H1 (cell line): ENCODE measurements at regions of chr2 and their contacts with region 1.

Region 1: DNA sequence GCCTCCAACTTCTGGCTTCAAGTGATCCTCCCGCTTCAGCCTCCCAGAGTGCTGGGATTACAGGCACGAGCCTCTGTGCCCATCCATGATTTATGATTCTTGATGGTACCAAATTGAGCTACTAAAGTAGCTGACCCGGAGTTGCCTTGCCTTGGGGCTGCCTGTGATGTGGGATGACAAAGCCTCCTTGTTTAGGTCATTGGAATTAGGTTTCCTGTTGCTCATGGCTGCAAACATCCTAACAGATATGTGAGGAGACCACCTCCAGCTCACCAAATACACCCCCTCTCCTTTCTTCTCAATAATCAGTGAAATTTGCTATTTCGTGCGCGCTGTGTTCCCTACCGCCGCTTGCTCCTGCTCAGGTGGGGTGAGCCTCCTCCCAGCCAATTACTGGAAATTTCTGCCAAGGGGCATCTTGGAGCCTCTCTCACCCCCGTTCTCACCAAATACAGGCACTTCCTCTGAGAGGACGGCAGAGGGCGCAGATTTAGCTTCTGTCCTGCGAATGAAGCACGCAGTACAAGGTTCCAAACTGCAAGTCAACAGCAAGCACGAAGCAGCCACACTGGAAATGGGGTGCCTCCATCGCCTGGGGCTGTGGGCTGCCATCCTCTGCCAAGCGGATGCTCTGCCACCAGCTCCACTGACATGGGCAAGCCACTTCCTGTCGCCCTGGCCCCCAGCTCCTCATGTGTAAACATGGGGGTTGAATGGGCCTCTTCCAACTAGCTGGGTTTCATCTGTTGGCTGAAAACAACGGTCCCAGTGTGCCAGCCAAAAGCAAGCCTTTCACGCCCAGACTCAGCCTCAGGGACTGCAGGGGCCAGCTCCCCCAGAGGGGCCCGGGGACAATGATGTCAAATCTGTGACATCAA is 71.7 kb downstream of the NCAPH start:
- DNase-seq: peak; percentile 53 to 78
- H3K4me3 ChIP-seq: no peak overlapping the region
- H3K27ac ChIP-seq: no peak overlapping the region
- H3K4me1 ChIP-seq: peaks cover 3 to 7% (median 4%) of the 10 kb centered on the region in 4 experiments
- H3K27me3 ChIP-seq: no peaks in the 10 kb centered on the region; a peak in 1 of 7 replicates
- CTCF ChIP-seq: peak; percentile 78 to 92 (median 88)
- EP300 ChIP-seq: no peak
- POLR2A ChIP-seq: no peak
- RAD21 ChIP-seq: peak; percentile 72 to 81

Region 2: DNA sequence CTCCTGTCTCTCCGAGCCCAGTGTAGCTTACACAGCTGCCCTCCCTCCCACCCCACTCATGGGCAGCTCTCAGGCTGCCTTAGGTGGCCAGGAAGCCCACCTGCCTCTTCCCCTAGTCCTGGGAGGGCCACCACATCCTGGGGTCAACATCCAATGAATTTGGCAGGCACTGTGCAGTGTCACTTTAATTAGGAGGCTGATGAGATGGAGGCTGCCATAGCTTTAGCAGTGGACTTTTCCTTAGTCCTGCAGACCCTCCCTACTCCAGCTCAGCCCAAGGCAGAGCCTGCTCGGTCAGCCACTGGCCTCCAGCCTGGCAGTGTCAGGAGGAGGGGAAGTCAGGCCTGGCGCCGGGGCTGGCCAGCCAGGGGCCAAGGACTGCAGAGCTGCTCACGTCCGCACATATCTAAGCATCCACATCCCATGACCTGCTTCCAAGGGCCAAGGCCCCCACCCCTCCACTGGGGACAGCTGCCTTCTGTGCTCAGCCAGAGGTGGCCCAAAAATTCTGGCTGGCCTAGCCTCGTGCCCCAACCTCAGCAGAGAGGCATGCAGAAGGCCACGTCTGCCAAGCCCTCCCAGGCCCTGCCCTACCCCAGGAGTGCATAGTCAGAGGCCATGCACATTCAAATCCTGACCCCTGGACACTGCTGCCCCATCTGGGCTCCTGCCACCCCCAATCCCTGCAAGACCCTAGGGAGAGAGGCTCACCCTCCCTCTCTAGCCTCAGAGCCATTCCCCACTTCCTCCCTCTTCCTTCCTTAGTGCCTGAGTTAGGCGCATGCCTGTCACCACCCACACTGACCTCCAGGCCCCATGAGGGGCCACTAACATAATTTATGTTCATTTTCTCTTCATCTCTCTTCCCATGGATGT is 324.0 kb before region 1 on chr2:
- CTCF ChIA-PET with region 1: no interaction called
- POLR2A ChIA-PET with region 1: no interaction called
- DNase-seq: peak in 1 of 2 experiments; percentile 30
- H3K4me3 ChIP-seq: no peak overlapping the region
- H3K27ac ChIP-seq: no peak overlapping the region
- H3K4me1 ChIP-seq: no peaks in the 10 kb centered on the region
- H3K27me3 ChIP-seq: no peaks in the 10 kb centered on the region
- CTCF ChIP-seq: no peak
- EP300 ChIP-seq: no peak
- POLR2A ChIP-seq: no peak
- RAD21 ChIP-seq: no peak

Region 3: GRCh38 chr2:96389736-96390135 is 17.5 kb before region 1 on chr2:
- CTCF ChIA-PET with region 1: interaction called, 28 read pairs
- POLR2A ChIA-PET with region 1: interaction called, 3 read pairs
- DNase-seq: no peak
- H3K4me3 ChIP-seq: no peak overlapping the region
- H3K27ac ChIP-seq: no peak overlapping the region
- H3K4me1 ChIP-seq: no peaks in the 10 kb centered on the region
- H3K27me3 ChIP-seq: no peaks in the 10 kb centered on the region
- CTCF ChIP-seq: no peak
- EP300 ChIP-seq: no peak
- POLR2A ChIP-seq: no peak
- RAD21 ChIP-seq: no peak

Region 4: GRCh38 chr2:96438589-96438988 is 31.3 kb after region 1 on chr2:
- CTCF ChIA-PET with region 1: interaction called, 11 read pairs
- POLR2A ChIA-PET with region 1: interaction called, 3 read pairs
- DNase-seq: no peak
- H3K4me3 ChIP-seq: no peak overlapping the region; a peak in 1 of 8 replicates
- H3K27ac ChIP-seq: no peak overlapping the region
- H3K4me1 ChIP-seq: peaks cover 0 to 5% (median 3%) of the 10 kb centered on the region in 4 experiments; a peak in 4 of 7 replicates
- H3K27me3 ChIP-seq: no peaks in the 10 kb centered on the region
- CTCF ChIP-seq: no peak
- EP300 ChIP-seq: no peak
- POLR2A ChIP-seq: no peak
- RAD21 ChIP-seq: no peak

Region 5: DNA sequence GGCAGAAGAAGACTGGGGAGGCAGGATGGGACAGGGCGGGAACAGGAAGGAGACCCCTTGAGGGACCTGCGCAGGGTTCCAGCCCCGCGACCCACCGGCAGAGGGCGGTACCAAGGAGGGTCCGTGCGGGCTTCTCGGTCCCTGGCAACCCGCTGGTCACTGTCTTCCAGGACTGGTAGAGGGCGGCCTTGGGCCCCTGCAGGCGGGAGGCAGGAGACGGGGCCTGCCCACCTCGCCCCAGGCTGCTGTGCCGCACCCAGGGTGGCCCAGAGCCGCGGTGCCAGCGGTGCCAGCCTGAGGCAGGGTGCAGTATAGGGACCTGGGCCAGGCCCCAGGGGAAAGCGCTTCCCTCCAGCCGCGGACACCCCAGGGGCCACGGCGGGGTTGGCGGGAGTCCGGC is 63.4 kb after region 1 on chr2:
- CTCF ChIA-PET with region 1: interaction called, 16 read pairs
- POLR2A ChIA-PET with region 1: no interaction called
- DNase-seq: peak; percentile 77 to 96
- H3K4me3 ChIP-seq: peak overlapping the region in 1 of 4 experiments; percentile 45; a peak in 2 of 8 replicates
- H3K27ac ChIP-seq: no peak overlapping the region
- H3K4me1 ChIP-seq: no peaks in the 10 kb centered on the region
- H3K27me3 ChIP-seq: no peaks in the 10 kb centered on the region
- CTCF ChIP-seq: peak; percentile 86 to 98 (median 89)
- EP300 ChIP-seq: no peak
- POLR2A ChIP-seq: no peak
- RAD21 ChIP-seq: peak; percentile 57 to 77